ENCODE measurements at regions of chr12 and their contacts with region 1.

Region 1: DNA sequence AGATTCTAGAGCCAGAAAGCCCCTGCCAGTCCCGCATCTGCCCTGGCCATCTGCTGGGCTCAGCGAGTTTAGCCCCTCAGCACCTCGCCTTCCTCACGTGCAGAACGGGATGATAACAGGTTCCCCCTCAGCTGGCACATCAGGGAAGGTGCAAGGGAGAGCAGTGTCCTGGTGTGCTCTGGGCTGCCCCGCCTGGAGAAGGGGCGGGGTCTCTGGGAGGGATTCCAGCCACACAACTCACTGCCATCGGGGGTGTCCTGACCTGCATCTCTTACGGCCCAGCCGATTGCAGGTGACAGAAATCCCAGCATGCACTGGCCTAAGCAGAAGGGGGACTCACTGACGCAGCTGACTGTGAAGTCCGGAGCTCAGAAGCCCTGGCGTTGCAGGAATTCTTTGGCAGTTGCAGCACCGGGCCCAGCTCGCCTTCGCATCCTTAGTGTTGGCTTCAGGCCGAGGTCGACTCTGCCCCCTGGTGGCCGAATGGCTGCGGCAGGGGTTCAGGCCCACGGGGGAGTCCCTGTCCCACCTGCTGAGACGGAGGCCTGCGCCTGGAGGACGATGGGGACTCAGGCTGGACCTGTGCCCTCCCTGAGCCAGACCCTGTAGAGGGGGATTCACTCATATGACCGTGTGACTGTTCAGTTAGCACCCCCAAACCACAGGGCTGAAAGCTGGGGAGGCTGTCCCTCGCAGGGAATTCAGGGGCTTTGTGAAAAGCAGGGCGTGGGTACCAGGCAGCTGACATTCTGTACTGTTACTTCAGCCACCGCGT is 178.6 kb downstream of the ADGRD1 start:
- DNase-seq: peak; percentile 63
- H3K4me3 Mint-ChIP-seq: no peak overlapping the region
- H3K27ac Mint-ChIP-seq: no peak overlapping the region
- H3K4me1 Mint-ChIP-seq: peaks cover 18% of the 10 kb centered on the region
- H3K27me3 Mint-ChIP-seq: peaks cover 2% of the 10 kb centered on the region
- CTCF ChIP-seq: peak; percentile 75

Region 2: DNA sequence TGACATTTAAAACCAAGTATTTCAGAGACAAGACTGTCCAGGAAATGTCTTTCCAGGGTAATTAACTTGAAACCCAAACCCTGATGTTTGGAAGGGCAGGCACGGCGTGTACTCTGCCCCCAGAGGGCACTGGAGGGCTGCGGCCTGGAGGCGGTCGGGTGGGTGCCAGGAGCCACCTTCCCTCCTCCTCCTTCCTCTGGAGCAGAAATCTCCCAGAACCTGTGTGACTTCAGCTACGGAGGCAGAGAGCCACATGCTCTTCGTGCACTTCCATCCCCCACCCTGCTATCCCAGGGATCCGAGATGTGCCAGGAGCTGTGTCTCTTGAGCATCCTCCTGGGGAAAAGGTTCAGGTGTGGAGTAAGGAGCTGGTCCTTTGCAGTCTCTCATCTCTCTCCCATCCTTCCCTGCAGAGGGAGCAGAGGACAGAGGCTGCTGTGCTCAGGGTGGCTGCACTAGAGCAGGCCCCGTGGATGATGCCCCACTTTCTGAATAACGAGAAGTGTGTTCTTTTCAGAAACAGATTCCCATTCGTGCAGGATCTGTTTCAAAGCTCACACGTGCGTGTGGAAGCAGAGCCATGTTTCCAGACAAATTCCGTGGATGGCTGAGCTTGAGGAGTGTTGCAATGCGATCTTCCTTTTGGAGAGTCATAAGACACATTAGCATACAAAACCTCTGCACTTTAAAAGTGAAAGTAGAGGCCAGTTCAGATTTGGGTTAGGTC is 15.8 kb before region 1 on chr12:
- CTCF ChIA-PET with region 1: interaction called, 55 read pairs
- POLR2A ChIA-PET with region 1: interaction called, 8 read pairs
- intact Hi-C with region 1: no loop called
- DNase-seq: no peak
- H3K4me3 Mint-ChIP-seq: no peak overlapping the region
- H3K27ac Mint-ChIP-seq: no peak overlapping the region
- H3K4me1 Mint-ChIP-seq: peaks cover 14% of the 10 kb centered on the region
- H3K27me3 Mint-ChIP-seq: no peaks in the 10 kb centered on the region
- CTCF ChIP-seq: no peak

Region 3: DNA sequence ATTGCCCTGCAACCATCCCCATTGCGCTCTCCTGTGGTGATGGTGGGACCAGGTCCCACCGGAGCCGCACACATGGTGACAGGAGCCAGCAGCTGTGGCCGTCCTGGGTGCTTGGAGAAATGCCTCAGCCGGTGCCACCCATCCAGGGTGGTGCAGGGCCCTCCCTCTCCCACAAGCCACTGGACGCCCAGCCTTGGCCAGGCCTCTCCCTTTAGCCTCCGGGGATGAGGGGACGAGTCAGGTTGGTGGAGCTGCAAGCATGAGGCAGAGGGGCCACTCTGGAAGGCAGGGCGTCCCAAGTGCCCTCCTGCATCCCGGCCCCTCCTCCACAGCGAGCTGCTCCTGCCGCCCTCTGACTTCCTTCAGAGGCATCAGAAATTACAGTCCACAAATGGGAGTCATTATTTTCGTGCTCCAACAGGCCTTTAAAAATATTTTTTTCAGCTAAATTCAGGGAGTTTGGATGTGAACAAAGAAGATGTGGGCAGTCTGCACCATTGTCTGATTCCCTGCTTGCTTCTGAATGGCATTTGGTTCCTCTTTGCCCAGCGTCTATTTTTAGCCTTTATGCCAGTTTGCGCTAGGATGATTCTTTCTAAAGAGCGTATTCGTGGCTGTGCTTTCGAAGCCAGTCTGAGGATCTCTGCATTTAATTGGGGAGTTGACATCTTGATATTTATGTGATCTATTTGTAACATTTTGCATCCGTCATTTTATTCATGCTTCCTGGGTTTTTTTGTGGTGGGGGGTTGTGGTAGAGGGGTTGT is 10.8 kb after region 1 on chr12:
- CTCF ChIA-PET with region 1: interaction called, 10 read pairs
- POLR2A ChIA-PET with region 1: no interaction called
- intact Hi-C with region 1: no loop called
- DNase-seq: no peak
- H3K4me3 Mint-ChIP-seq: no peak overlapping the region
- H3K27ac Mint-ChIP-seq: no peak overlapping the region
- H3K4me1 Mint-ChIP-seq: no peaks in the 10 kb centered on the region
- H3K27me3 Mint-ChIP-seq: peaks cover 3% of the 10 kb centered on the region
- CTCF ChIP-seq: no peak

Region 4: DNA sequence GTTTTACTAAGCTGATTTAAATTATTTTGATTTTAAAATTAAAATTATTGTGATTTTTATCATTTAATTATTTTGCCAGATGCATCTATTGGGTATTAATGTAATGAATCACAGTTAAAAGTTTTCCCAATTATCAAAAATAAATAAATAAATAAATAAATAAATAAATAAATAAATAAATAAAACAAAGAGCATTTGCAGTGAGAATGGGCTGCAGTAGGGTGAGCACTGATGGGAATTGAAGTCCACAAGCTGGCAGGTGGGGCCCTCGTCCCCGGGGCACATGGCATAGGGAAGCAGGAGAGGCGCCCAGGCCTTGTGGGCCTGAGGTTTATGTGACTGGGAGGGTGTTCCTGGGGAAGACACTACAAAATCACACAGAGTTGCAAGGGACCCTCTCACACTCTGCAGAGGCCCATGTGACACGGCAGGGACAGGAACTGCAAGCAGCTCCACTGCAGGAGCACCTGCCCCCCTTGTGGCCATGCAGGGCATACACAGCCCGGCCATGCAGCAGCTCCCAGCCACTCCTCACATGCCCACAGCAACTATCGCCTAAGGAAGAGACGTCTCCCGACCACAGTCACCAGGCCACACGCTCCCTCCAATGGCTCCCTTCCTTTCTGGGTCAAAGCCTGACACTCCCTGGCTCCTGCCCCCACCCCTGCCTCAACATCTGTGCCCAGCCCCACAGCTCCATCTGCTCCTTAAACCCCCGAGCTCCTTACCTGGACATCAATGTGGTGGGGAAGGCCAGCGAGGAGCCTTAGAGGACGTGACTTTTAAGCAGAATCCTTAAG is 322.3 kb after region 1 on chr12:
- CTCF ChIA-PET with region 1: interaction called, 20 read pairs
- POLR2A ChIA-PET with region 1: no interaction called
- intact Hi-C with region 1: no loop called
- DNase-seq: peak; percentile 57
- H3K4me3 Mint-ChIP-seq: no peak overlapping the region
- H3K27ac Mint-ChIP-seq: no peak overlapping the region
- H3K4me1 Mint-ChIP-seq: peaks cover 5% of the 10 kb centered on the region
- H3K27me3 Mint-ChIP-seq: peaks cover 44% of the 10 kb centered on the region
- CTCF ChIP-seq: peak; percentile 92

Measured in MCF 10A (cell line).